ENCODE measurements at regions of chr6 and their contacts with region 1.

Region 1: GRCh38 chr6:2999618-3000557 is at the start of gene NQO2:
- DNase-seq: peak; percentile 91
- ATAC-seq: peak; percentile 88
- H3K4me3 Mint-ChIP-seq: peak within 1 kb of the TSS; percentile 90
- H3K27ac Mint-ChIP-seq: peak within 1 kb of the TSS; percentile 80
- H3K4me1 Mint-ChIP-seq: peaks cover 16% of the 10 kb centered on the region
- H3K27me3 Mint-ChIP-seq: no peaks in the 10 kb centered on the region
- CTCF ChIP-seq: no peak
- total RNA-seq, gene NQO2: 11.9 and 12.3 TPM in 2 replicates

Region 2: GRCh38 chr6:3023663-3024483 is 24.0 kb after region 1 on chr6:
- CTCF ChIA-PET with region 1: interaction called, 21 read pairs
- POLR2A ChIA-PET with region 1: interaction called, 93 read pairs
- intact Hi-C with region 1: loop called (anchors 1 kb)
- DNase-seq: peak; percentile 76
- ATAC-seq: peak; percentile 82
- H3K4me3 Mint-ChIP-seq: peak overlapping the region; percentile 90
- H3K27ac Mint-ChIP-seq: peak overlapping the region; percentile 88
- H3K4me1 Mint-ChIP-seq: peaks cover 54% of the 10 kb centered on the region
- H3K27me3 Mint-ChIP-seq: no peaks in the 10 kb centered on the region
- CTCF ChIP-seq: no peak

Region 3: GRCh38 chr6:3052481-3053230 is 52.8 kb after region 1 on chr6:
- CTCF ChIA-PET with region 1: interaction called, 50 read pairs
- POLR2A ChIA-PET with region 1: interaction called, 38 read pairs
- intact Hi-C with region 1: loop called (anchors 1 kb)
- DNase-seq: no peak
- ATAC-seq: no peak
- H3K4me3 Mint-ChIP-seq: peak overlapping the region; percentile 76
- H3K27ac Mint-ChIP-seq: no peak overlapping the region
- H3K4me1 Mint-ChIP-seq: peaks cover 14% of the 10 kb centered on the region
- H3K27me3 Mint-ChIP-seq: peaks cover 9% of the 10 kb centered on the region
- CTCF ChIP-seq: no peak

Region 4: DNA sequence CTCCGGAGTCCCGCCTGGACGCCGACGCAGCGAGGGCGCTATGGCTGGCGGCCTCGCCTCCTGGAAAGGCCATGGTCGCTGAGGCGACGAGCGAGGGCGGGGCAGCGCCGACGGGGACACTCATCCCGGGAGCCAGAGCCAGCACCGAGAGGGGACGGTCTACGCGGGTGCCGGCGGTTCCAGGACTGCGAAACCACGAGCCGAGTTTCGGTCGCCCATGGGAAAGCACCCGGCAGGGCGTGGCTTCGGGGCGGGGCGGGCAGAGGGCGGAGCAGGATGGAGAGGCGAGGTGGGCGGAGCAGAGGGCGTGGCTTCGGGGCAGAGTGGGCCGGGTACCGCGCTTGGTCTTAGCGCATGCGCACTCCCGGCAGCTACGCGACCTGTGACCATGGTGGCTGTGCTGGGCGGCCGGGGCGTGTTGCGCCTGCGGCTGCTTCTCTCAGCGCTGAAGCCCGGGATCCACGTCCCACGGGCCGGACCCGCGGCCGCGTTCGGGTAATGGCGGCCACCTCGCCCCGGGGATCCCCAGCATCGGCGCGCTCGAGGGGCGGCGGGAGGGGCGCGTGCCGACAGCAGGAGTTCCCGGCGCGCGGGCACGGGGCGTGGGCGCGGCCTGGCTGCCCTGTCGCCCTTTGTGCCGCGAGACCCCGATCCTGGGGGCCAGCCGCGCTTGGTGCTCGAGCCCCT is 118.6 kb after region 1 on chr6 and contains the start of gene BPHL:
- CTCF ChIA-PET with region 1: no interaction called
- POLR2A ChIA-PET with region 1: interaction called, 4 read pairs
- intact Hi-C with region 1: loop called (anchors 2 kb)
- DNase-seq: peak; percentile 100
- ATAC-seq: peak; percentile 92
- H3K4me3 Mint-ChIP-seq: peak within 1 kb of the TSS; percentile 89
- H3K27ac Mint-ChIP-seq: peak within 1 kb of the TSS; percentile 93
- H3K4me1 Mint-ChIP-seq: peaks cover 16% of the 10 kb centered on the region
- H3K27me3 Mint-ChIP-seq: no peaks in the 10 kb centered on the region
- CTCF ChIP-seq: no peak
- total RNA-seq, gene BPHL: 10.5 and 11.0 TPM in 2 replicates

Region 5: GRCh38 chr6:3251462-3252314 is 251.8 kb after region 1 on chr6:
- CTCF ChIA-PET with region 1: interaction called, 4 read pairs
- POLR2A ChIA-PET with region 1: no interaction called
- intact Hi-C with region 1: loop called (anchors 1 kb)
- DNase-seq: peak; percentile 68
- ATAC-seq: peak; percentile 100
- H3K4me3 Mint-ChIP-seq: peak overlapping the region; percentile 64
- H3K27ac Mint-ChIP-seq: peak overlapping the region; percentile 21
- H3K4me1 Mint-ChIP-seq: peaks cover 6% of the 10 kb centered on the region
- H3K27me3 Mint-ChIP-seq: peaks cover 30% of the 10 kb centered on the region
- CTCF ChIP-seq: peak; percentile 91

Region 6: GRCh38 chr6:3258720-3259490 is 259.0 kb after region 1 on chr6 and contains the start of gene PSMG4:
- CTCF ChIA-PET with region 1: no interaction called
- POLR2A ChIA-PET with region 1: interaction called, 3 read pairs
- intact Hi-C with region 1: loop called (anchors 2 kb)
- DNase-seq: peak; percentile 96
- ATAC-seq: peak; percentile 90
- H3K4me3 Mint-ChIP-seq: peak within 1 kb of the TSS; percentile 98
- H3K27ac Mint-ChIP-seq: peak within 1 kb of the TSS; percentile 88
- H3K4me1 Mint-ChIP-seq: peaks cover 40% of the 10 kb centered on the region
- H3K27me3 Mint-ChIP-seq: peaks cover 6% of the 10 kb centered on the region
- CTCF ChIP-seq: no peak
- total RNA-seq, gene PSMG4: 28.7 and 29.9 TPM in 2 replicates

Region 7: GRCh38 chr6:3732345-3733141 is 732.7 kb after region 1 on chr6:
- CTCF ChIA-PET with region 1: no interaction called
- POLR2A ChIA-PET with region 1: no interaction called
- intact Hi-C with region 1: loop called (anchors 5 kb)
- DNase-seq: peak; percentile 54
- ATAC-seq: peak; percentile 61
- H3K4me3 Mint-ChIP-seq: no peak overlapping the region
- H3K27ac Mint-ChIP-seq: no peak overlapping the region
- H3K4me1 Mint-ChIP-seq: peaks cover 2% of the 10 kb centered on the region
- H3K27me3 Mint-ChIP-seq: peaks cover 2% of the 10 kb centered on the region
- CTCF ChIP-seq: no peak